BJ (cell line): ENCODE measurements at regions of chr18 and their contacts with region 1.

Region 1: DNA sequence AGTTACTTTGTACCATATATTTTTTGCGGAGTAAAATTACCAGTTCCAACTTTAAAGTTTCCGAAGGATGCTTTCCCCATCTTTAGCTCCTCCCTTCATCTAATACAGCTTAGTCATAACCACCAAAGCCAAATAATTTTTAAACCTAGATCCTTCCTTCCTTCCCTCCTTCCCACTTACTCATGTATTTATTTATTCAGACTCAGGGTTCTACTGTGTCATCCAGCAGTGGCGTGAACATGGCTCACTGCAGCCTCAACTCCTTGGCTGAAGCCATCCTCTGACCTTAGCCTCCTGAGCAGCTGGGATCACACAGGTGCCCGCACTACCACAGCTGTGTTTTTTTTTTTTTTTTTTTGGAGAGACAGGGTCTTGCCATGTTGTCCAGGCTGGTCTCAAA is 4.4 kb downstream of the LPIN2 start:
- DNase-seq: peak; percentile 37
- H3K4me3 ChIP-seq: no peak overlapping the region
- H3K27me3 ChIP-seq: no peaks in the 10 kb centered on the region
- CTCF ChIP-seq: no peak

Region 2: DNA sequence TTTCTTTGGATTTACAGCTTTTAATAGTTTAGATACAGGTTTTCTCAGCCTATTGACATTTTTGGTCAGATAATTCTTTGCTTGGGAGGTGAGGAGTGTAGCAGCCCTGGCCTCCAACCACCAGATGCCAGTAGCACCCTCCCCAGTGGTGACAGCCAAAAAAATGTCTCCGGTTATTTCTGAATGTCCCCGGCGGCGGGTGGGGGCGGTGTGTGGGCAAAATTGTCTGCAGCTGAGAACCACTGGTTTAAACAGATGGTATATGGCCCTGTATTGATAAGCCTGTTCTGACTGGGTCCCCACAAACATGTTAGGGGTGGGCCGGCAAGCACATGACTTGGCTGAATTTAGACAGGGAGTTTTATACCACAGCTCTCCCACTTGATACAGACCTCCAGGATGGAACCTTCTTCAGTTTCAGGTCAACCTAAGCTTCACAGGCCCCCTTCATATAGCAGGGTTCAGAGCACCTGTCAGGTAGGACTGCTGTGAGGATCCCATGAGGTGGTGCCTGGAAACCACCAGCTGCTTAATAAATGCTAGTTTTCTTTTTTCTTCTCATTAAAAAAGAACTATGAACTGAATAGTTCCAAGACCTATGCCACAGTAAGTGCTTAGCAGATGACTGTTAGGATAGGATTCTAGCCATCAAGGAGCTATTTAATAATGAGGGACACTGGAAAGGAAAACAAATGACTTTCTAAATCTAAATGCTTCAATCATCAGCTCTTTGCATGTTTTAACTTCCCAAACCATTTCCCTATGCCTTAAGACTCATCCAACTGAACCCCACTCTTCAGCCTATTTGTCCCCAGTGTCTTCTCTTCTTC is 13.7 kb before region 1 on chr18:
- CTCF ChIA-PET with region 1: interaction called, 5 read pairs
- POLR2A ChIA-PET with region 1: interaction called, 10 read pairs
- DNase-seq: no peak
- H3K4me3 ChIP-seq: no peak overlapping the region
- H3K27me3 ChIP-seq: no peaks in the 10 kb centered on the region
- CTCF ChIP-seq: peak; percentile 22; the same call in 1 of the 2 replicates

Region 3: GRCh38 chr18:3186678-3187658 is 178.4 kb after region 1 on chr18:
- CTCF ChIA-PET with region 1: no interaction called
- POLR2A ChIA-PET with region 1: no interaction called
- DNase-seq: no peak
- H3K4me3 ChIP-seq: no peak overlapping the region
- H3K27me3 ChIP-seq: no peaks in the 10 kb centered on the region
- CTCF ChIP-seq: no peak